ENCODE measurements at regions of chr15 and their contacts with region 1.

Region 1: GRCh38 chr15:40857601-40858341 is 13.9 kb downstream of the SPINT1 start:
- DNase-seq: peak; percentile 91
- H3K4me3 ChIP-seq: no peak overlapping the region; a peak in 1 of 4 replicates
- H3K27ac ChIP-seq: no peak overlapping the region
- H3K4me1 ChIP-seq: peaks cover 0 to 3% of the 10 kb centered on the region in 2 experiments; a peak in 1 of 4 replicates
- H3K27me3 ChIP-seq: no peaks in the 10 kb centered on the region
- CTCF ChIP-seq: peak; percentile 92
- EP300 ChIP-seq: no peak
- RAD21 ChIP-seq: peak; percentile 82

Region 2: DNA sequence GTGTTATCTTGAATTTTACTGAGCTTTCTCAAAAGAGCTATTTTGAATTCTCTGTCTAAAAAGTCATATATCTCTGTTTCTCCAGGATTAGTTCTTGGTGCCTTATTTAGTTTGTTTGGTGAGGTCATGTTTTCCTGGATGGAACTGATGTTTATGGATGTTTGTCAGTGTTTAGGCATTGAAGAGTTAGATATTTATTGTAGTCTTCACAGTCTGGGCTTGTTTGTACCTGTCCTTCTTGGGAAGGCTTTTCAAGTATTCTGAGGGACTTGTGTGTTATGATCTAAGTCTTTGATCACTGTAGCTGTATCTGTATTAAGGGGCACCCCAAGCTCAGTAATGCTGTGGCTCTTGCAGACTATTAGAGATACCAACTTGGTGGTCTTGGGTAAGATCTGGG is 173.4 kb before region 1 on chr15:
- CTCF ChIA-PET with region 1: interaction called, 15 read pairs
- POLR2A ChIA-PET with region 1: no interaction called
- DNase-seq: no peak
- H3K4me3 ChIP-seq: no peak overlapping the region
- H3K27ac ChIP-seq: no peak overlapping the region
- H3K4me1 ChIP-seq: no peaks in the 10 kb centered on the region
- H3K27me3 ChIP-seq: no peaks in the 10 kb centered on the region
- CTCF ChIP-seq: no peak
- EP300 ChIP-seq: no peak
- RAD21 ChIP-seq: no peak

Region 3: DNA sequence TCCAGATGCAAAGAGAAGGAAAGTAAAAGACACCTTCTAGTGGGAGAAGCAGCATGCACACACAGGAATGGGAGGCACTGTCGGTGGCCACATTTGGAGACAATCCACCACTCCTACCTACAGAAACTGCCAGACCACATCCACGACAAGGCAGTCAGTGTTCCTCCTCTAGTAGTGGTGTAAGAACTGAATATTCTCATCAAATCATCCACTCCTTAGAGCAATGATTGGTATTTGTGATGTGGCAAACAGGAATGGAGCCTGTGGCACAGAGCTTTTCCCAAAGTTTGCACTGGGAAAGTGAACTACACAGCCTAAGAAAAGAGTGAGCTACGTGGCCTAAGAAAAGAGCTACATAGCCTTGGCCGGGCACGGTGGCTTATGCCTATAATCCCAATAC is 19.0 kb before region 1 on chr15:
- CTCF ChIA-PET with region 1: interaction called, 120 read pairs
- POLR2A ChIA-PET with region 1: no interaction called
- DNase-seq: no peak
- H3K4me3 ChIP-seq: no peak overlapping the region
- H3K27ac ChIP-seq: no peak overlapping the region
- H3K4me1 ChIP-seq: peaks cover 0 to 3% of the 10 kb centered on the region in 2 experiments; a peak in 2 of 4 replicates
- H3K27me3 ChIP-seq: peaks cover 9% of the 10 kb centered on the region; the same call in 1 of the 2 replicates
- CTCF ChIP-seq: no peak
- EP300 ChIP-seq: no peak
- RAD21 ChIP-seq: no peak

Region 4: GRCh38 chr15:40847205-40847961 is 10.4 kb before region 1 on chr15:
- CTCF ChIA-PET with region 1: interaction called, 120 read pairs
- POLR2A ChIA-PET with region 1: interaction called, 3 read pairs
- DNase-seq: peak; percentile 51
- H3K4me3 ChIP-seq: no peak overlapping the region
- H3K27ac ChIP-seq: no peak overlapping the region
- H3K4me1 ChIP-seq: peaks cover 0 to 17% of the 10 kb centered on the region in 2 experiments; a peak in 1 of 4 replicates
- H3K27me3 ChIP-seq: peaks cover 9% of the 10 kb centered on the region; the same call in 1 of the 2 replicates
- CTCF ChIP-seq: no peak
- EP300 ChIP-seq: no peak
- RAD21 ChIP-seq: no peak

Region 5: DNA sequence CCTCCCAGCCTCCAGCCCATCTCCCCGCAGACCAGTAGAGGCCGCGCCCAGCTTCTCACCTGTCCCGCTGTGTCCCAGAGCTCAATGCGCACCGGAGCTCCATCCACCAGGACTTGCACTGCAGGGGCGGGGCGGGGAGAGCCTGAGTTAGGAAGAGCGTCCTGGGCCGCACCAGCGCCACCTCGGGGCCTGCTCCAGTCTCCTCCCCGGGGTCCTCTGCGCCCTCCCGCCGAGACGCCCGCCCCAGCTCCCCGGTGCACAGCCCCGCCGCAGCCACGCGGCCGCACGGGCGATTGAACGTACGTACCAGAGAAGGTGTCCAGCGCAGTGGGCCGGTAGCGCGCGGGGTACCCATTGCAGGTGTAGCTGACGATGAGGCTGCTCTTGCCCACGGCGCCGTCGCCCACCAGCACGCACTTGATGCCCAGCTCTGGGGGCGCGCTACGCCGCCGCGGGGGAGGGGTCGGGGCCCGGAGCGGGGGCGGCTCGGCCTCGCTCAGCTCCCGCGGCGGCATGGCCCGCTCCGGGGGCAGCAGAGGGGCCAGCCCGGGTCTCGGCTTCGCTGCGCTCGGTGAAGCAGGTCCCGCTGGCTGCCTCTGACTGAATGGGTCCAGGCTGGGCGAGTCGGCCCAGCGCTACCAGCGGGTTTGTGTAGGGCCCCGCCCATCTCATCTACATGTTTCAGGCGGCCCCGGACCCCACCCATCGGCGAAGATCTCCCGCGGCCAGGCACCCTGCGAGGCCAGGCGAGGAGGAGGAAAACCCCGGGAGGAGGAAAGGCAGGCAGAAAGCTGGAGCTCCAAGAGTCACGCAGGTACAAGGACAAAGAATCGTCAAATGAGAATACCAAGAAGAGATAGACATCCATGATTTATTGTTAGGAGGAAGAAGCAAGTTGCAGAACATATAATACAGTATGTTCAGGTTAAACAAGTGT is 16.1 kb after region 1 on chr15 and contains the start of gene RHOV:
- CTCF ChIA-PET with region 1: no interaction called
- POLR2A ChIA-PET with region 1: interaction called, 12 read pairs
- DNase-seq: peak; percentile 92
- H3K4me3 ChIP-seq: peak within 1 kb of the TSS; percentile 52 to 63
- H3K27ac ChIP-seq: no peak within 1 kb of the TSS
- H3K4me1 ChIP-seq: no peaks in the 10 kb centered on the region; a peak in 1 of 4 replicates
- H3K27me3 ChIP-seq: no peaks in the 10 kb centered on the region
- CTCF ChIP-seq: peak; percentile 47
- EP300 ChIP-seq: no peak
- RAD21 ChIP-seq: 0 out of 2 replicates have a peak, but pooled peaks have one; percentile 16
- polyA plus RNA-seq, gene RHOV: 0.49 and 0.62 TPM in 2 replicates

Region 6: DNA sequence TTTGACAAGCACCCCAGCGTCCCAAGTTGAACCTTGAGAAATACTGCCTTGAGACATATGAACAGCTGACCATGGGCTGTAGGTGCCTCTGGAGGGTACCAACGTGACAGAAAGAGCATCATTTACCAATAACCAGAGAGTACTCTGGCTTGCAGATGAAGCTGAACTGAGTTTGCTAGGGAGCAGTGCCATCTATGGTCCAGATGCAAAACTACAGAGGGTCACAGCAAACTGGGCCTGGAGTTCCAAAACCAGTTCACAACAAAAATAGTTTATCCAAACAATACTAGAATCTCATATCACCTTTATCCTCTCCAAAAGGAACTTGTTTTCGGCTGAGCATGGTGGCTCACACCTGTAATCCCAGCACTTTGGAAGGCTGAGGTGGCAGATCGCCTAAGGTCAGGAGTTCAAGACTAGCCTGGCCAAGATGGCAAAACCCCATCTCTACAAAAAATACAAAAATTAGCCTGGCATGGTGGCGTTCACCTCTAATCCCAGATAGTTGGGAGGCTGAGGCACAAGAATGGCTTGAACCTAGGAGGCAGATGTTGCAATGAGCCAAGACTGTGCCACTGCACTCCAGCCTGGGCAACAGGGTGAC is 164.8 kb after region 1 on chr15:
- CTCF ChIA-PET with region 1: interaction called, 12 read pairs
- POLR2A ChIA-PET with region 1: no interaction called
- DNase-seq: peak; percentile 61
- H3K4me3 ChIP-seq: no peak overlapping the region; a peak in 1 of 4 replicates
- H3K27ac ChIP-seq: no peak overlapping the region
- H3K4me1 ChIP-seq: peaks cover 2 to 23% of the 10 kb centered on the region in 2 experiments; a peak in 3 of 4 replicates
- H3K27me3 ChIP-seq: no peaks in the 10 kb centered on the region
- CTCF ChIP-seq: peak; percentile 83
- EP300 ChIP-seq: no peak
- RAD21 ChIP-seq: peak; percentile 91

Measured in SK-N-SH (cell line).